ENCODE measurements at regions of chr4 and their contacts with region 1.

Region 1: GRCh38 chr4:124111922-124112321 is 600.6 kb downstream of the ANKRD50 start:
- DNase-seq: peak; percentile 55
- ATAC-seq: peak; percentile 84
- H3K4me3 ChIP-seq: no peak overlapping the region
- H3K27ac ChIP-seq: no peak overlapping the region
- H3K4me1 ChIP-seq: no peaks in the 10 kb centered on the region
- H3K27me3 ChIP-seq: no peaks in the 10 kb centered on the region
- CTCF ChIP-seq: peak; percentile 83
- EP300 ChIP-seq: no peak
- POLR2A ChIP-seq: no peak
- RAD21 ChIP-seq: peak; percentile 65

Region 2: DNA sequence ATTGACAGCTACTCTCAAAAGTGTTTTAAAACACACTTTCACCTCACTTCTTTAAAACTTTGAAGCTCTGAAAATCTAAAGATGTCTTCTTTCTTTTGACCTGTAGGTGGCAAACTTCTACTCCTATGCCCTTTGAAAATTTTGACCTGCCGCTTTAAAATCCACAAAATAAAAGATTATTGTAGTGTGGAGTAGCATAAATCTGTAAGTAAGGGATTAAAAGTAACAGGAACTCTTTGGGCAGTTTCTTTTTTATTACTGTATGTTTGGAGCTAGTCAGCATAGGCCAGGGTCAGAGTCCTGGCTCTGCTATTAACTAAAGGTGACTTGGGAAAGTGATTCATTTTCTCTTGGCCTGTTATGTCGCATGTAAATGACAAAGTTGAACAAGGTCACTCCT is 1353.9 kb before region 1 on chr4:
- CTCF ChIA-PET with region 1: no interaction called
- POLR2A ChIA-PET with region 1: no interaction called
- in situ Hi-C with region 1: loop called (anchors 25 kb)
- intact Hi-C with region 1: no loop called
- DNase-seq: no peak
- ATAC-seq: peak; percentile 35; the same call in 1 of the 3 replicates
- H3K4me3 ChIP-seq: peak overlapping the region in 1 of 3 experiments; percentile 27; a peak in 1 of 6 replicates
- H3K27ac ChIP-seq: no peak overlapping the region
- H3K4me1 ChIP-seq: peaks cover 16% of the 10 kb centered on the region
- H3K27me3 ChIP-seq: no peaks in the 10 kb centered on the region
- CTCF ChIP-seq: peak; percentile 61
- EP300 ChIP-seq: no peak
- POLR2A ChIP-seq: no peak
- RAD21 ChIP-seq: 0 out of 2 replicates have a peak, but pooled peaks have one; percentile 23

Region 3: DNA sequence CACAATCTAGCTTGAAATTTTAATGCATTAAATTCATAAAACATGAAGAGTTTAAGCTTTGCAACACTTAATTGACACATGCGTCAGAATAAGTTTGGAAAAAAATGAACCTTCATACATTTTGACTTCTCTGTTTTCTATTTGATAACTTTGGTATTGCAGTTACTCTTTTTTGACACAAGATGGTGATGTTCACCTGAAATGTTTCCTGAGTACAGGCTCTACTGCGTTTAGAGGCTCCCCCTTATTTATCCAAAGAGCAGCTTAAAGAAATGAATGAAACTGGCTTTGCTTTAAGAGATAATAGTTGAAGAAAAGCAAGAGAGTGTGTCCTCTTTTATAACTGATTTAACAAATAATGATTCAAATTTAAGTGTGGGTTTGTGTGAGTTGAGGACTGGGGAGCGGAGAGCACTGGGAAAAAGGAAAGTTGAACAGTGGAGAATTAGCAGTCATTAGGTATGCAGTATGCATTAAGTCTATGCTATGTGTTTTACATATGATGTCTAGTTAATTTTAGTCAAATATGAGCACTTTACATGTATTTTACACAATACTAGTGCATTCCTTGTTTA is 1008.9 kb before region 1 on chr4:
- CTCF ChIA-PET with region 1: interaction called, 12 read pairs
- POLR2A ChIA-PET with region 1: no interaction called
- in situ Hi-C with region 1: loop called (anchors 10 kb)
- intact Hi-C with region 1: loop called (anchors 1 kb)
- DNase-seq: peak; percentile 49
- ATAC-seq: peak; percentile 77
- H3K4me3 ChIP-seq: no peak overlapping the region
- H3K27ac ChIP-seq: no peak overlapping the region
- H3K4me1 ChIP-seq: no peaks in the 10 kb centered on the region
- H3K27me3 ChIP-seq: no peaks in the 10 kb centered on the region
- CTCF ChIP-seq: peak; percentile 69
- EP300 ChIP-seq: no peak
- POLR2A ChIP-seq: no peak
- RAD21 ChIP-seq: peak; percentile 69; the same call in 1 of the 2 replicates

Region 4: DNA sequence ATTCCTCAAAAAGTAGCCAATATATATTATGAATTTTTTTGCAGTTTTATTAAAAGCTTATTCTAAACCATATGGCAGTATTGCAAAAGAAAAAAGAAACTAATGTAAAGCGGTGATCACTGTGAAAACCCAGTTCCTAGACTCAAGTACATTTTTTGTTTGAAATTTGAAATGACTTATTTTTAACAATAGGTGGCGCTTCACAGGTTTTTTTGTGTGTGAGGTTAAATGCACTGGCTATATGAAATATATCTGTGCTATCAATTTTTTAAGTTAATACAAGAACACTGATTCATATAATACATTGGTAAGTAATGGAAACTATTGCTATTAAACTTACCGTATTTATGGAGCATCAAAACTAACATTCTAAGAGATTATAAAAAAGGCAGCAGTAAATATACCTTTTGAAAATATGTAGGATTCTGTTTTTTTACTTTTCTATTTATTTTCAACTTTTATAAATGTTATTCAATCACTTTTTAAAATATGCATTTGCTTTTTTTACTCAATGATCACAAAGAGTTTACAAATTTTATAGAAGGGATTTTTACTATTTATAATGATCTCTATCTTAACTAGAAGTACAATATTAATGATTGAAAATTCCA is 721.0 kb before region 1 on chr4:
- CTCF ChIA-PET with region 1: no interaction called
- POLR2A ChIA-PET with region 1: no interaction called
- in situ Hi-C with region 1: loop called (anchors 25 kb)
- intact Hi-C with region 1: loop called (anchors 1 kb)
- DNase-seq: no peak
- ATAC-seq: no peak
- H3K4me3 ChIP-seq: no peak overlapping the region
- H3K27ac ChIP-seq: no peak overlapping the region
- H3K4me1 ChIP-seq: peaks cover 7% of the 10 kb centered on the region; the same call in 1 of the 2 replicates
- H3K27me3 ChIP-seq: no peaks in the 10 kb centered on the region
- CTCF ChIP-seq: peak; percentile 52
- EP300 ChIP-seq: no peak
- POLR2A ChIP-seq: no peak
- RAD21 ChIP-seq: 0 out of 2 replicates have a peak, but pooled peaks have one; percentile 20

Region 5: GRCh38 chr4:123661080-123661737 is 450.7 kb before region 1 on chr4:
- CTCF ChIA-PET with region 1: no interaction called
- POLR2A ChIA-PET with region 1: no interaction called
- in situ Hi-C with region 1: no loop called
- intact Hi-C with region 1: loop called (anchors 5 kb)
- DNase-seq: no peak
- ATAC-seq: no peak
- H3K4me3 ChIP-seq: no peak overlapping the region
- H3K27ac ChIP-seq: no peak overlapping the region
- H3K4me1 ChIP-seq: peaks cover 30% of the 10 kb centered on the region
- H3K27me3 ChIP-seq: no peaks in the 10 kb centered on the region
- CTCF ChIP-seq: peak; percentile 36; the same call in 1 of the 2 replicates
- EP300 ChIP-seq: no peak
- POLR2A ChIP-seq: no peak
- RAD21 ChIP-seq: peak; percentile 47; the same call in 1 of the 2 replicates

Region 6: DNA sequence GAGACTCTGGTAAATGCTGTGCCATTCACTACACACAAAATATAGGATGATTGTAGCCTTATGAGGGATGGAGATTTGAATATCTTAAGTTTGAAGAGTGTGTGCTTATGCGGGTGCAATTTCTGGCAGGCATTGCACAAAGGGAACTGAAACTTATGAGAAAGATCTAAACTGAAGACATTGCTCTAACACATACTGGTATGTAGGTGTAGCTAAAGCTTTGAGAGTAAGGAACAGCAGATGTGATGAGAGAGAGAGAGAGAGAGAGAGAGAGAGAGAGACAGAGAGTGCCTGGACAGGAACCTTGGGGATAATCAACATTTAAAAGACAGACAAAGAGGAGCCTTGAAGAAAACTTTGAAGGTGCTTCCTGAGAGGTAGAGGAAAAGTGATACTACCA is 335.7 kb before region 1 on chr4:
- CTCF ChIA-PET with region 1: interaction called, 14 read pairs
- POLR2A ChIA-PET with region 1: no interaction called
- in situ Hi-C with region 1: loop called (anchors 5 kb)
- intact Hi-C with region 1: loop called (anchors 1 kb)
- DNase-seq: no peak
- ATAC-seq: no peak
- H3K4me3 ChIP-seq: no peak overlapping the region
- H3K27ac ChIP-seq: no peak overlapping the region
- H3K4me1 ChIP-seq: no peaks in the 10 kb centered on the region
- H3K27me3 ChIP-seq: no peaks in the 10 kb centered on the region
- CTCF ChIP-seq: no peak
- EP300 ChIP-seq: no peak
- POLR2A ChIP-seq: no peak
- RAD21 ChIP-seq: no peak